Naive thymus-derived CD4-positive, alpha-beta T cell (primary cell): ENCODE measurements at regions of chr14 and their contacts with region 1.

Region 1: DNA sequence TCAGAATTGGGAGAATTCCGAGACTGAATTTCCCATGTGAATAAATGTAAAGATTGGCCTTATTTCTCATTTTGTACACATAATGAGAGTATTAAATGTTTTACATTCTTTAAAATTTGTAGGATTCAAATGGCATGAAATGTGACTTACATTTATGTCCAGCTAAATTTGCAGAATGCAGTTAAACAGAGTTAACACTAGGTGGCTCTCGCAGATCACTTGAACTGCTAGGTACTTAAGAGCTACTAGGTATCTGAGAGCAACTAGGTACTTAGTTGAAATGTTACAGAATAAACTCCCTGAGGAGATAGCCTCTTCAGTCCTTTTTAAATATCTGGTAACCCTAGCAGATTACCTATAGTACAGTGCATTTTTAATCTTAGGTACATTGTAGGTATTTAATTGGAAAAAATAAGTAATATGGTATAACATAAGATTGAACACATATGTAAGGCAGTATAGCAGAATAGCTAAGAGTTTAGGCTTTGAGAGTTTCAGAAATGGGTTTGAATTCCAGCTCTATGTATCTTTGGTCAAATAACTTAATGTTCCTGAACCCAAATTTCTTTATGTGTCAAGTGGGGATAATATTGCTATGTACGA is 73.8 kb downstream of the KIAA0586 start:
- DNase-seq: peak in 7 of 9 donors; percentile 21 to 62 (median 51)
- ATAC-seq: peak; percentile 78
- H3K4me3 ChIP-seq: no peak overlapping the region
- H3K4me3 Mint-ChIP-seq: no peak overlapping the region
- H3K27ac ChIP-seq: no peak overlapping the region
- H3K27ac Mint-ChIP-seq: no peak overlapping the region
- H3K4me1 ChIP-seq: no peaks in the 10 kb centered on the region
- H3K4me1 Mint-ChIP-seq: no peaks in the 10 kb centered on the region
- H3K27me3 ChIP-seq: no peaks in the 10 kb centered on the region
- H3K27me3 Mint-ChIP-seq: no peaks in the 10 kb centered on the region

Region 2: DNA sequence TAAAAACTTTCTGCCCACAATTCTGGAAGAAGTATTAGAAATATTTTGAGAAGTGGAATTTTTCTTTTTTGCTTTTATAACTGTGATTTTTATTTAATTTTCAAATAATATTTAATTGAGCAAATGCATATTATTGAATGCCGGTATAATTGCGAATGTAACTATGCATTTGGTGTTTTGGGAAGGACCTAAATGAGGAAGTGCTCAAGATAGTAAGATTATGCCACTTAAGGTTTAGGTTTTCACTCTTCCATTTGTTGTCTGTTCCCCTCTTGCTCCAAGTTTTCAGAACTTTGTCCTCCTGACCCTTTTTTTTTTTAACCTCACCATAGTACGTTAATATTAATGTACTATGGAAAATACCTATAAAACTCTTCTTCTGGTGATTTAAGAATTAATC is 12.0 kb after region 1 on chr14:
- CTCF ChIA-PET with region 1: interaction called, 11 read pairs
- POLR2A ChIA-PET with region 1: interaction called, 3 read pairs
- intact Hi-C with region 1: no loop called
- DNase-seq: no peak
- ATAC-seq: no peak
- H3K4me3 ChIP-seq: no peak overlapping the region
- H3K4me3 Mint-ChIP-seq: no peak overlapping the region
- H3K27ac ChIP-seq: no peak overlapping the region
- H3K27ac Mint-ChIP-seq: no peak overlapping the region
- H3K4me1 ChIP-seq: no peaks in the 10 kb centered on the region
- H3K4me1 Mint-ChIP-seq: peaks cover 0 to 6% (median 0%) of the 10 kb centered on the region in 7 donors
- H3K27me3 ChIP-seq: no peaks in the 10 kb centered on the region
- H3K27me3 Mint-ChIP-seq: no peaks in the 10 kb centered on the region

Region 3: GRCh38 chr14:58626431-58626831 is 125.1 kb after region 1 on chr14:
- CTCF ChIA-PET with region 1: interaction called, 10 read pairs
- POLR2A ChIA-PET with region 1: no interaction called
- intact Hi-C with region 1: no loop called
- DNase-seq: no peak
- ATAC-seq: no peak
- H3K4me3 ChIP-seq: no peak overlapping the region
- H3K4me3 Mint-ChIP-seq: no peak overlapping the region
- H3K27ac ChIP-seq: no peak overlapping the region
- H3K27ac Mint-ChIP-seq: no peak overlapping the region
- H3K4me1 ChIP-seq: no peaks in the 10 kb centered on the region
- H3K4me1 Mint-ChIP-seq: peaks cover 4 to 30% (median 15%) of the 10 kb centered on the region in 7 donors
- H3K27me3 ChIP-seq: no peaks in the 10 kb centered on the region
- H3K27me3 Mint-ChIP-seq: peaks cover 0 to 2% (median 0%) of the 10 kb centered on the region in 5 donors

Region 4: DNA sequence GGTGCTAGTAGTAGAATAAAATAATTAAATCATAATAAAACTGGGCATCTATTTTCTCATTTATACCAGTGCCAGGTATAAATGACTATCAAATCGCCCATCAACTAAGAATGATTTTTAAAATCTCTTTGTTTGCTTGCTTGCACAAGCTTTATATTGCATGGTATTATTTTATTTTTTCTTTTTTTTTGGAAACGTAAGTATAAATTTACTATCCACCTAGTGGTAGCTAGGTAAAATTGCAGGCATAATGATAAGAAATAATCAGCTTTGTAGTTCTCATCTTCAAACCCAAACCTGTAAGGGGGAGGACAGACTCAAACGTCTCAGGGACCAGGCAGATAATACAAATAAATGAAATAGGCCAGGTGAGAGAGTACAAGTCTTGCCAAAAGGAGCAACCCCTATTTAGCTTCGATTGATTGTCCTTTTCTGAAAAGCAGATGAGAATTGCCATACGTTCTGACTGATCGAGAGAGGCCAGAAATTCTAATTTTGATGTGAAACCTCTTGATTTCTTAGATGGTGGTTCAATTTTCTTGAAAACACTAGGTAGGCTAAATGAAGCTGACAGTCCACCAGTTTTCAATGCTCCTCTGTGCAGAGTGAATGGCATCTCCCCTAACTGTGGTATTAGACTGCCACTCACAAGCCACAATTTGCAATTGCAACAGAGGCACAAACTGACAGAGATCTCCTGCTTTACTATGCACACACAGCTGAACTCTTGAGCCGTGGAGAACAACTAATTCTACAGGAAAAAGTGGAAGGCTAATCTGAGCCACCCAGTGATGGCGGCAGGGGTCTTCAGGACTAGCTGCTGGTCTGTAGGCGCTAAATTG is 325.8 kb after region 1 on chr14:
- CTCF ChIA-PET with region 1: no interaction called
- POLR2A ChIA-PET with region 1: no interaction called
- intact Hi-C with region 1: loop called in 1 of 2 experiments (anchors 1 kb)
- DNase-seq: no peak
- ATAC-seq: no peak
- H3K4me3 ChIP-seq: no peak overlapping the region
- H3K4me3 Mint-ChIP-seq: no peak overlapping the region
- H3K27ac ChIP-seq: no peak overlapping the region
- H3K27ac Mint-ChIP-seq: no peak overlapping the region
- H3K4me1 ChIP-seq: no peaks in the 10 kb centered on the region
- H3K4me1 Mint-ChIP-seq: peaks cover 0 to 14% (median 3%) of the 10 kb centered on the region in 7 donors
- H3K27me3 ChIP-seq: no peaks in the 10 kb centered on the region
- H3K27me3 Mint-ChIP-seq: no peaks in the 10 kb centered on the region

Region 5: GRCh38 chr14:59028476-59029202 is 527.3 kb after region 1 on chr14:
- CTCF ChIA-PET with region 1: interaction called, 4 read pairs
- POLR2A ChIA-PET with region 1: no interaction called
- intact Hi-C with region 1: loop called (anchors 1 to 2 kb)
- DNase-seq: peak in 5 of 9 donors; percentile 5 to 25 (median 14)
- ATAC-seq: peak; percentile 65
- H3K4me3 ChIP-seq: no peak overlapping the region
- H3K4me3 Mint-ChIP-seq: peak overlapping the region in 3 of 10 donors; percentile 13 to 40 (median 29)
- H3K27ac ChIP-seq: no peak overlapping the region
- H3K27ac Mint-ChIP-seq: peak overlapping the region in 1 of 9 donors; percentile 47
- H3K4me1 ChIP-seq: no peaks in the 10 kb centered on the region
- H3K4me1 Mint-ChIP-seq: peaks cover 0 to 8% (median 2%) of the 10 kb centered on the region in 7 donors
- H3K27me3 ChIP-seq: no peaks in the 10 kb centered on the region
- H3K27me3 Mint-ChIP-seq: peaks cover 0 to 11% (median 4%) of the 10 kb centered on the region in 5 donors

Region 6: GRCh38 chr14:59126710-59127432 is 625.6 kb after region 1 on chr14:
- CTCF ChIA-PET with region 1: interaction called, 10 read pairs
- POLR2A ChIA-PET with region 1: no interaction called
- intact Hi-C with region 1: loop called (anchors 1 kb)
- DNase-seq: peak in 6 of 9 donors; percentile 35 to 65 (median 56)
- ATAC-seq: peak; percentile 82
- H3K4me3 ChIP-seq: no peak overlapping the region
- H3K4me3 Mint-ChIP-seq: no peak overlapping the region
- H3K27ac ChIP-seq: no peak overlapping the region
- H3K27ac Mint-ChIP-seq: no peak overlapping the region
- H3K4me1 ChIP-seq: no peaks in the 10 kb centered on the region
- H3K4me1 Mint-ChIP-seq: no peaks in the 10 kb centered on the region
- H3K27me3 ChIP-seq: peaks cover 0 to 3% of the 10 kb centered on the region in 2 donors
- H3K27me3 Mint-ChIP-seq: peaks cover 14 to 30% (median 17%) of the 10 kb centered on the region in 5 donors

Region 7: GRCh38 chr14:59576332-59577294 is 1075.3 kb after region 1 on chr14 and contains the start of gene CCDC175:
- CTCF ChIA-PET with region 1: no interaction called
- POLR2A ChIA-PET with region 1: no interaction called
- intact Hi-C with region 1: loop called (anchors 1 to 5 kb)
- DNase-seq: peak; percentile 66 to 84 (median 78)
- ATAC-seq: peak; percentile 98
- H3K4me3 ChIP-seq: peak within 1 kb of the TSS; percentile 63
- H3K4me3 Mint-ChIP-seq: peak within 1 kb of the TSS; percentile 66 to 86 (median 78)
- H3K27ac ChIP-seq: no peak within 1 kb of the TSS
- H3K27ac Mint-ChIP-seq: peak within 1 kb of the TSS in 3 of 9 donors; percentile 8 to 26 (median 14)
- H3K4me1 ChIP-seq: peaks cover 3 to 4% of the 10 kb centered on the region in 2 donors
- H3K4me1 Mint-ChIP-seq: peaks cover 4 to 9% (median 7%) of the 10 kb centered on the region in 7 donors
- H3K27me3 ChIP-seq: no peaks in the 10 kb centered on the region
- H3K27me3 Mint-ChIP-seq: peaks cover 20 to 46% (median 29%) of the 10 kb centered on the region in 5 donors
- total RNA-seq, gene CCDC175: not detected